ENCODE measurements at regions of chr12 and their contacts with region 1.

Region 1: GRCh38 chr12:80756875-80757274 is 40.2 kb downstream of the MYF5 start:
- DNase-seq: peak; percentile 44
- ATAC-seq: no peak
- H3K4me3 ChIP-seq: no peak overlapping the region
- H3K27ac ChIP-seq: no peak overlapping the region
- H3K4me1 ChIP-seq: no peaks in the 10 kb centered on the region
- H3K27me3 ChIP-seq: no peaks in the 10 kb centered on the region
- CTCF ChIP-seq: no peak
- POLR2A ChIP-seq: no peak
- RAD21 ChIP-seq: no peak

Region 2: DNA sequence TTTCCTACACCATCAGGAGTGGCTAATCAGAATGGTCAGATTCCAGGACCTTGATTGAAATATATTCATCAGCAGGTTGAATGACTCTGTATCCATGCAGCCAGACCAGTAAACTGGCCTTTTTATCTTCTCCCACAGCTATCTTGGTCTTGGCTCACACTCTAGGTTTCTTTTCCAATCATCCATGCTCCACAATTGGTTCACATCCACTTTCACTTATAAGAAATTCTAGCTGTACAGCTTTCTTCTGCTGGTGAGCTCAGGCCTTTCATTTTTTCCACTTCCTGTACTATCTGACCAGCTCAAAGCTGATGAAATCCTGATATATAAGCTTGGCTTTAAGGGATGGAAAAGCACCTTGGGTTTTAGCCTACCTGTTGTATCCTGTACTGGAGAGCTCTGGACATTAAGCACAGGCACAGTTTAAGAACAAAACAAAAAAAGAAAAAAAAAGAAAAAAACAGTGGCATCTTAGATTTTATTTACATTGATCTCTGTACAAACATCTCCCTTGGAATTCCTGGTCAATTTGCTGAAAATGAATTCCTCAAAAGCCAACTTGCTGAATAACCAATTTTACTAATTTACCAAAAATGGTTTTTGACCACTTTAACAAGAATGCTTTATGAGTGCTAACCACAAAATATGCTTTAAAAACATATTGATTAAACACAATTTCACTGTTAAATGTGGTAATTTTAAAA is 974.5 kb before region 1 on chr12:
- CTCF ChIA-PET with region 1: no interaction called
- POLR2A ChIA-PET with region 1: no interaction called
- dilution Hi-C with region 1: no loop called
- in situ Hi-C with region 1: no loop called
- intact Hi-C with region 1: no loop called
- DNase-seq: peak; percentile 72
- ATAC-seq: peak; percentile 67
- H3K4me3 ChIP-seq: no peak overlapping the region
- H3K27ac ChIP-seq: peak overlapping the region; percentile 25; the same call in 1 of the 2 replicates
- H3K4me1 ChIP-seq: peaks cover 10% of the 10 kb centered on the region; the same call in 1 of the 2 replicates
- H3K27me3 ChIP-seq: no peaks in the 10 kb centered on the region
- CTCF ChIP-seq: no peak
- POLR2A ChIP-seq: no peak
- RAD21 ChIP-seq: no peak

Region 3: DNA sequence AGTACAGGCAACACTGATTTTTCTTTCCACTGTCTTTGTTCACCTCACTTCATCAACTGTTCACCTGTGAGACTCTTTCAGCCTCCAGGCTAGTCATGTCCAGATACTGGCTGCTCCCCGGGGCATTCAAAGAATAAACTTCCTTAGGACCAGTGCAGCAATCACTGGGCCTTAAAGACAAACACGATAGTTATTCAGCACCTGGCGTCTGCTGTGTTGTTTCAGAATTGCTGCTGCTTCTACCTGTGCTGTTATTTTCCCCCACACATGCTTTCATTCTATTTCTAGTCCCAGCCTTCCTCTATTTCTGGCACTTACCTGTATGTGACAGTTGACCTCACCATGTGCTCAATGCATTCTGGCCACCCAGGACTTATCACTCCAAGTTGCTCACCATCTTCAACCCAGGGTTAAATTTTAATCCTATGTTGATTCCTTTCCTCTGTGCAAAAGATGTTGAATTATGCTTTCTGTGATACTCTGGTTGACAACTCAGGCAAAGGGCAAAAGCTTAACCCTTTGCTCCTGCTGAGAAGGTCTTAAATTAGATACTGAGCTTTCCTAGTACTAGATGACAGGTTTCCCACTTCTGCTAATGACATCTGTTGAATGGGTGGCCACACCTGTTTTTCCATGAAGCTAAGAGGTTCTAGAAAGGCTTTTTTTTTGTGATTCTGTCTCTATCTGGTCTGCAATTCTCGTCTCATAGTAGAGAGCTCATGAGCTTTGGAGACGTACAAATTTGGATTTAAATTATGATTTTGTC is 271.5 kb before region 1 on chr12:
- CTCF ChIA-PET with region 1: no interaction called
- POLR2A ChIA-PET with region 1: no interaction called
- dilution Hi-C with region 1: no loop called
- in situ Hi-C with region 1: loop called (anchors 5 kb)
- intact Hi-C with region 1: no loop called
- DNase-seq: no peak
- ATAC-seq: no peak
- H3K4me3 ChIP-seq: no peak overlapping the region
- H3K27ac ChIP-seq: no peak overlapping the region
- H3K4me1 ChIP-seq: peaks cover 2% of the 10 kb centered on the region; the same call in 1 of the 2 replicates
- H3K27me3 ChIP-seq: no peaks in the 10 kb centered on the region
- CTCF ChIP-seq: no peak
- POLR2A ChIP-seq: no peak
- RAD21 ChIP-seq: no peak

Region 4: DNA sequence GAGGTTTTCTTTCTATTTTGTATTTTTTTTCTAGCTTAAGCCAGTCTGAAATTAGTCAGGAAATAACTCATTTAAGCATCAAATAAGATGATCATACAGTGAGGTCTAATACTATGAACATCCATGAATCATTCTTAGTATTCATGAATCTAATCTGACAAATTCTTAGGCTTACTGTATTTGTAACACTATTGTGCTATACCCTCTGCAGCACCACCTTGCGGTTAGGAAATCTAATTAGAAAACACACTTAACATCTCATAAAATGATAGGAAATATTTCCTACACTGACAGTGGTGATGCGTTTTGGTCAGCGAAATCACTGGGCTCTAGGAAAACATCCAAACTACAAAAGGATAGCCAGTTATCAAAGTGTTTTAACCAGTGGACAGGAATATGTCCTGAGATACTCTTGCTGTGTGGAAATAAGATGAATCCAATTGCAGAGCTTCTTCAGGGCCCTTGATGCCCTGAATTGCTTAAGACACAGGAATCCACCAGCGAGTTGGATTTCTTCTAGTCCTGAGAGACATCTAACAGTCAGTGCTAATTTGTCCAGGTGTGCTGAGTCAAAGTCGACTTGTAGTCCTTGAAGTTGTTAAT is 158.8 kb before region 1 on chr12:
- CTCF ChIA-PET with region 1: no interaction called
- POLR2A ChIA-PET with region 1: no interaction called
- dilution Hi-C with region 1: no loop called
- in situ Hi-C with region 1: no loop called
- intact Hi-C with region 1: no loop called
- DNase-seq: peak; percentile 83
- ATAC-seq: peak; percentile 67
- H3K4me3 ChIP-seq: no peak overlapping the region
- H3K27ac ChIP-seq: no peak overlapping the region
- H3K4me1 ChIP-seq: peaks cover 11% of the 10 kb centered on the region; the same call in 1 of the 2 replicates
- H3K27me3 ChIP-seq: no peaks in the 10 kb centered on the region
- CTCF ChIP-seq: peak; percentile 63
- POLR2A ChIP-seq: no peak
- RAD21 ChIP-seq: peak; percentile 62

Measured in IMR-90 (cell line).